ENCODE measurements at regions of chr1 and their contacts with region 1.

Region 1: DNA sequence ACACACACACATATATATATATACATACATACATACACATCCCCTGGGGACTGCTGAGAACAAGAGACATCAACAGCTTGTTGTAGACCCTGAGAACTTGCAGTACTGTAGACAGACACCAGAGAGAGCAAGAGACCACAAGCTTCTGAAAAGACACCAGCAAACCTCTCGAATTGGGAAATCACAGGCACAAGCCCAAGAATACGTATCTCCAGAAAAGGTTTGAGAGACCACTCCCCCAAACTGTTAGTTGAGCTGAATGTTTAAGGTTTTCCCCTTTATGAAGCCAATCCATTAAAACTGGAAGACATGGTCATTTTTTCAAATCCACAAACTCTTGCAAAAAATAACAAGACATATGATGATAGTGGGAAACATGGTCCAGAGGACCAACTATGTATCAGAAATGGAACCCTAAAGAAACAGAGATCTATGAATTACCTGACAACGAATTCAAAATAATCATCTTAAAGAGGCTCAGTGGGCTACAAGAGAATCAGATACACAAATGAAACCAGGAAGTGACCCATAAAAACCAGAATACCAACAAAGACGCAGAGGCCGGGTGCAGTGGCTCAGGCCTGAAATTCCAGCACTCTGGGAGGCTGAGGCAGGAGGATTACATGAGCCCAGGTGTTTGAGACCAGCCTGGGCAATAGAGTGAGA is 45.1 kb downstream of the SLC2A1 start:
- DNase-seq: peak; percentile 82
- ATAC-seq: peak; percentile 90
- H3K4me3 Mint-ChIP-seq: no peak overlapping the region
- H3K27ac Mint-ChIP-seq: no peak overlapping the region
- H3K4me1 Mint-ChIP-seq: peaks cover 5% of the 10 kb centered on the region
- H3K27me3 Mint-ChIP-seq: peaks cover 9% of the 10 kb centered on the region

Region 2: GRCh38 chr1:42777852-42778251 is 135.7 kb before region 1 on chr1:
- CTCF ChIA-PET with region 1: interaction called, 21 read pairs
- POLR2A ChIA-PET with region 1: no interaction called
- intact Hi-C with region 1: loop called in 1 of 2 experiments (anchors 1 kb)
- DNase-seq: peak; percentile 55
- ATAC-seq: peak; percentile 79
- H3K4me3 Mint-ChIP-seq: no peak overlapping the region
- H3K27ac Mint-ChIP-seq: no peak overlapping the region
- H3K4me1 Mint-ChIP-seq: peaks cover 14% of the 10 kb centered on the region
- H3K27me3 Mint-ChIP-seq: no peaks in the 10 kb centered on the region

Region 3: GRCh38 chr1:42936309-42937078 is 22.9 kb after region 1 on chr1:
- CTCF ChIA-PET with region 1: interaction called, 10 read pairs
- POLR2A ChIA-PET with region 1: no interaction called
- intact Hi-C with region 1: no loop called
- DNase-seq: peak; percentile 54
- ATAC-seq: peak; percentile 28
- H3K4me3 Mint-ChIP-seq: no peak overlapping the region
- H3K27ac Mint-ChIP-seq: peak overlapping the region; percentile 88
- H3K4me1 Mint-ChIP-seq: peaks cover 96% of the 10 kb centered on the region
- H3K27me3 Mint-ChIP-seq: no peaks in the 10 kb centered on the region

Region 4: GRCh38 chr1:43002116-43002515 is 88.6 kb after region 1 on chr1:
- CTCF ChIA-PET with region 1: no interaction called
- POLR2A ChIA-PET with region 1: no interaction called
- intact Hi-C with region 1: no loop called
- DNase-seq: no peak
- ATAC-seq: no peak
- H3K4me3 Mint-ChIP-seq: no peak overlapping the region
- H3K27ac Mint-ChIP-seq: no peak overlapping the region
- H3K4me1 Mint-ChIP-seq: no peaks in the 10 kb centered on the region
- H3K27me3 Mint-ChIP-seq: no peaks in the 10 kb centered on the region

Region 5: DNA sequence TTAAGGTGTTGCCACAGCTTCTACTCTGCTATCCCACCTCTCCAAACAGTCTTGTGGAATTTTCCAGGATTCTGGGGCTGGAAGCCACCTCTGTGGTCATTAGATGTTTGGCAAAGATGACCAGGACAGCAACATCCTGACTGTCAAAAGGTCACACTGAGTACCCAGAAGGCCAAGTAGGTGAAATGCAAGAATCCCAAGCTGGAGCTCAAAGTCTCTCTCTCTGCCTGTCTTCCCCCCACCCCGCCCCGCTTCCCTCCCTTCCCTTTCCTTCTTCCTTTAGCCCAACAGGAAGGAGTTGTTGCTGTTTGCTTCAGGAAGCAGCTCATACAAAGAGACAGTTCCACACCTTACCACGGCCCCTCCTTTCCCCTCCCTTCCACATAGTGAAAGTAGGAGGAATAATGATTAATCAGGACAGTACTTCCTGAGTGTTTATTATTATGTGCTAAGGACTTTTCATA is 120.7 kb after region 1 on chr1:
- CTCF ChIA-PET with region 1: no interaction called
- POLR2A ChIA-PET with region 1: no interaction called
- intact Hi-C with region 1: no loop called
- DNase-seq: no peak
- ATAC-seq: peak; percentile 23
- H3K4me3 Mint-ChIP-seq: no peak overlapping the region
- H3K27ac Mint-ChIP-seq: peak overlapping the region; percentile 76
- H3K4me1 Mint-ChIP-seq: peaks cover 10% of the 10 kb centered on the region
- H3K27me3 Mint-ChIP-seq: no peaks in the 10 kb centered on the region